GM10248 (cell line): ENCODE measurements at regions of chr19 and their contacts with region 1.

Region 1: GRCh38 chr19:11380653-11381534 is 3.2 kb downstream of the EPOR start:
- DNase-seq: peak; percentile 98
- CTCF ChIP-seq: peak; percentile 67

Region 2: GRCh38 chr19:11346092-11346940 is 34.6 kb before region 1 on chr19 and contains the starts of genes CCDC159 and TMEM205:
- CTCF ChIA-PET with region 1: interaction called, 10 read pairs
- POLR2A ChIA-PET with region 1: interaction called, 5 read pairs
- DNase-seq: peak; percentile 97
- CTCF ChIP-seq: peak; percentile 26

Region 3: GRCh38 chr19:11390933-11391680 is 10.2 kb after region 1 on chr19:
- CTCF ChIA-PET with region 1: interaction called, 22 read pairs
- POLR2A ChIA-PET with region 1: no interaction called
- DNase-seq: no peak
- CTCF ChIP-seq: no peak

Region 4: DNA sequence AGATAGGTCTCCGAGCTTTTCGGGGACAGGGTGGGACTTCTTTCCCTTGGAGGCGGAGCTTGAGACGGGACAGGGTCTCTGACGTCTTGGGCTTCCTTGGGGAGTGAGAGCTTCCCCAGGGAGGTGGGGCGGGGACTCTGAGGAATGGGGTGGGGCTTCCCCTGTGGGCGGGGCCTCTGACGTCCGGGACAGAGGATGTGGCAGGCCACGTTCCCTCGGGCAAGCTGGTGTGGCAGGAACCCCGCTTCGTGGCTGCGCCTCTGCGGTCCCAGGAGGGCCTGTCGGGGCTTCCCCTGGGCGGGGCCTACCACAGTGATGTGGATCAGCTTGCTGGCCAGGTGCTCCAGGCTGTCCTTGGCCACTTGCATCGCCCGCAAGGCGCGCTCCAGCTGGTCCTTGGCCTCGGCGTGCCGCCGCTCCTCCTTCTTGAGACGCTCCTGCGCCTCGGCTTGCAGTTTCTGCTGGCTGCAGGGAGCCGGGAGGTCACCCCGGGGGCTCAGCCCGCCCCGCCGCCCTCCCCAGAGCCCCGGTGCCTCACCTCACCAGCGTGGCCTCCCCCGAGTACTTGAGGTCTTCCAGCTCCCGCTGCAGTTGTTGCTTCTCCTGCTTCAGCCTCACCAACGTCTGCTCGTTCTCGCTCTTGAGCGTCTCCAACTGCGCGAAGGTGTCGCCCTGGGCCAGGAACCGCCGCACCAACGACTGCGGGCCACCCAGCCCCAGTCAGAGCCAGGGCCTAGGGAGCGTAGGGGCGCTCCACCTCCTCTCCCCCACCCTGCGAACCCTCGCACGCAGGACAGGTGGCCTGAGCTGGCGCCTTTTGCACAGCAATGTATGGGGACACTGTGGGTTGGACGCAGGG is 41.5 kb after region 1 on chr19:
- CTCF ChIA-PET with region 1: interaction called, 50 read pairs
- POLR2A ChIA-PET with region 1: interaction called, 5 read pairs
- DNase-seq: peak; percentile 91
- CTCF ChIP-seq: no peak

Region 5: GRCh38 chr19:11587302-11587974 is 206.5 kb after region 1 on chr19:
- CTCF ChIA-PET with region 1: interaction called, 10 read pairs
- POLR2A ChIA-PET with region 1: no interaction called
- DNase-seq: peak; percentile 83
- CTCF ChIP-seq: peak; percentile 99